Dorsolateral prefrontal cortex (tissue), 120 donors: ENCODE measurements at regions of chr18 and their contacts with region 1.

Region 1: GRCh38 chr18:67951137-67951536 is 434.6 kb upstream of the DSEL start:
- DNase-seq: no peak
- H3K4me3 ChIP-seq: no peak overlapping the region
- H3K27ac ChIP-seq: no peak overlapping the region
- H3K27me3 ChIP-seq: peaks cover 0 to 12% (median 0%) of the 10 kb centered on the region in 45 donors
- CTCF ChIP-seq: no peak

Region 2: DNA sequence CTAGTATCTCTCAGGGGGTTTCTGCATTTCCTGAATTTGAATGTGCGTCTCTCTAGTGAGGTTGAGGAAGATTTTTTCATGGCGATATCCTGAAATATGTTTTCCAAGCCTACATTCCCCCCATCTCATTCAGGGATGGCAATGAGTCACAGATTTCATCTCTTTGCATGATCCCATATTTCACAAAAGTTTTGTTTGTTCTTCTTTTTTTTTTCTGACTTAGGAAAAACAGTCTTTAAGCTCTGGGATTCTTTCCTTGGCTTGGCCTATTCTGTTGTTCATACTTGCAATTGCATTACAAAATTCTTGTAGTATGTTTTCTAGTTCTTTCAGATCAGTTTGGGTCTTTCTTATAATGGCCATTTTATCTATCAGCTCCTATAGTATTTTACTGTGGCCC is 571.2 kb before region 1 on chr18:
- intact Hi-C with region 1: no loop called
- DNase-seq: no peak
- H3K4me3 ChIP-seq: no peak overlapping the region
- H3K27ac ChIP-seq: no peak overlapping the region
- H3K27me3 ChIP-seq: peaks cover 0 to 4% (median 0%) of the 10 kb centered on the region in 45 donors
- CTCF ChIP-seq: no peak

Region 3: GRCh38 chr18:67966224-67966623 is 15.1 kb after region 1 on chr18:
- intact Hi-C with region 1: loop called in 1 of 2 experiments (anchors 2 kb)
- DNase-seq: no peak
- H3K4me3 ChIP-seq: no peak overlapping the region
- H3K27ac ChIP-seq: no peak overlapping the region
- H3K27me3 ChIP-seq: no peaks in the 10 kb centered on the region
- CTCF ChIP-seq: no peak